ENCODE measurements at regions of chr11 and their contacts with region 1.

Region 1: GRCh38 chr11:130861902-130862860 is 54.1 kb downstream of the SNX19 start:
- DNase-seq: peak; percentile 88
- H3K4me3 Mint-ChIP-seq: no peak overlapping the region
- H3K27ac Mint-ChIP-seq: no peak overlapping the region
- H3K4me1 Mint-ChIP-seq: no peaks in the 10 kb centered on the region
- H3K27me3 Mint-ChIP-seq: no peaks in the 10 kb centered on the region
- CTCF ChIP-seq: peak; percentile 100

Region 2: GRCh38 chr11:130213143-130213978 is 648.8 kb before region 1 on chr11:
- CTCF ChIA-PET with region 1: interaction called, 17 read pairs
- POLR2A ChIA-PET with region 1: no interaction called
- intact Hi-C with region 1: loop called (anchors 2 kb)
- DNase-seq: peak; percentile 55
- H3K4me3 Mint-ChIP-seq: no peak overlapping the region
- H3K27ac Mint-ChIP-seq: no peak overlapping the region
- H3K4me1 Mint-ChIP-seq: no peaks in the 10 kb centered on the region
- H3K27me3 Mint-ChIP-seq: no peaks in the 10 kb centered on the region
- CTCF ChIP-seq: peak; percentile 96

Region 3: DNA sequence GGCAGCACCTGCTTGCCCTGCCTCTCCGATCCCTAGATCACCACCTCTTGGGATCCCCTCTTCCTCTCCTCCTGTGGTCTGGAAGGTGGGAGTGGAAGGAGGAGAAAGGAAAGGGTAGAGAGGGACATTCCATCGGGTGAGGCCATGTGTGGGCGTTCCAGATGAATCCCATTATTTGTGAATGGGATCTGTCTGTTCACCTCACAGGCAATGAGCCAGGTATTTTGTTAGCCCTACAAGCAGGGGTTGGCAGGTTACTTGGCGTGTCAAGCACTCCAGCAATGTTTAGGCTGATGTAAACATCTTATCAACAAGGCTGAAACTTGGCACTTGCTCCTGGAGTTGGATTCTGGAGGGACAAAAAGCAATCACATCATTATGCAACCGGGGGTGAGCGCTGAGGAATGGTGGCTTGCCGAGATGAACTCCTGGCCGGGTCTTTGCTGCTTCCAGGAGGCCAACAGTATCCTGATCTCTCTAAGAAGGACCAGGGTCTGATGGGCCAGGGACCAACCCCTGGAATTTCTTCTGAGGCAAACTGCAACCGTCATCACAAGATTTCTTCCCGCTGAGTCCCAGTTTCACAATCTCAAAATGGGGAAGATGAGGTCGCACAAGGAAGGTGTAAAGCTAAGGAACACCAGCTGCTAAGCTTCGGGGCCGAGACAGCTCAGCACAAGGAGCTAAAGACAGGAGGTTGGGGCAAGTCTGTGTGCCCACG is 441.5 kb before region 1 on chr11:
- CTCF ChIA-PET with region 1: interaction called, 1,064 read pairs
- POLR2A ChIA-PET with region 1: no interaction called
- intact Hi-C with region 1: no loop called
- DNase-seq: peak; percentile 46
- H3K4me3 Mint-ChIP-seq: no peak overlapping the region
- H3K27ac Mint-ChIP-seq: no peak overlapping the region
- H3K4me1 Mint-ChIP-seq: no peaks in the 10 kb centered on the region
- H3K27me3 Mint-ChIP-seq: peaks cover 28% of the 10 kb centered on the region
- CTCF ChIP-seq: no peak

Region 4: GRCh38 chr11:130677486-130678153 is 184.6 kb before region 1 on chr11:
- CTCF ChIA-PET with region 1: interaction called, 12 read pairs
- POLR2A ChIA-PET with region 1: no interaction called
- intact Hi-C with region 1: no loop called
- DNase-seq: peak; percentile 68
- H3K4me3 Mint-ChIP-seq: peak overlapping the region; percentile 45
- H3K27ac Mint-ChIP-seq: peak overlapping the region; percentile 90
- H3K4me1 Mint-ChIP-seq: peaks cover 31% of the 10 kb centered on the region
- H3K27me3 Mint-ChIP-seq: no peaks in the 10 kb centered on the region
- CTCF ChIP-seq: no peak

Region 5: GRCh38 chr11:130832566-130833425 is 29.4 kb before region 1 on chr11:
- CTCF ChIA-PET with region 1: interaction called, 144 read pairs
- POLR2A ChIA-PET with region 1: interaction called, 3 read pairs
- intact Hi-C with region 1: loop called (anchors 1 kb)
- DNase-seq: no peak
- H3K4me3 Mint-ChIP-seq: no peak overlapping the region
- H3K27ac Mint-ChIP-seq: no peak overlapping the region
- H3K4me1 Mint-ChIP-seq: no peaks in the 10 kb centered on the region
- H3K27me3 Mint-ChIP-seq: no peaks in the 10 kb centered on the region
- CTCF ChIP-seq: no peak

Region 6: DNA sequence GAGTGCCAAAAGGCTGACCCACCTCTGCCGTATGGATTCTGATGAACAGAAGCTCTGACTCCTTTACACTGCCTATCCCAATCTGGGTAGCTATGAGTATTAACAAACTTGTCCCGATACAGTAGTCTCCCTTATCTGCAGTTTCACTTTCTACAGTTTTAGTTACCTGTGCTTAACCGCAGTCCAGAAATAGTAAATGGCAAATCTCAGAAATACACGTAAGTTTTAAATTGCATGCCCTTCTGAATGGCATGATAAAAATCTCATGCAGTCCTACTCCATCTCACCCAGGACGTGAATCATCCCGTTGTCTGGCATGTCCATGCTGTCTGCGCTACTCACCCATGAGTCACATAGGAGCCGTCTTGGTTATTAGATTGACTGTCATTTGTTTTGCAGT is 14.7 kb before region 1 on chr11:
- CTCF ChIA-PET with region 1: interaction called, 111 read pairs
- POLR2A ChIA-PET with region 1: interaction called, 4 read pairs
- intact Hi-C with region 1: no loop called
- DNase-seq: peak; percentile 92
- H3K4me3 Mint-ChIP-seq: peak overlapping the region; percentile 57
- H3K27ac Mint-ChIP-seq: peak overlapping the region; percentile 55
- H3K4me1 Mint-ChIP-seq: peaks cover 18% of the 10 kb centered on the region
- H3K27me3 Mint-ChIP-seq: no peaks in the 10 kb centered on the region
- CTCF ChIP-seq: no peak

Region 7: DNA sequence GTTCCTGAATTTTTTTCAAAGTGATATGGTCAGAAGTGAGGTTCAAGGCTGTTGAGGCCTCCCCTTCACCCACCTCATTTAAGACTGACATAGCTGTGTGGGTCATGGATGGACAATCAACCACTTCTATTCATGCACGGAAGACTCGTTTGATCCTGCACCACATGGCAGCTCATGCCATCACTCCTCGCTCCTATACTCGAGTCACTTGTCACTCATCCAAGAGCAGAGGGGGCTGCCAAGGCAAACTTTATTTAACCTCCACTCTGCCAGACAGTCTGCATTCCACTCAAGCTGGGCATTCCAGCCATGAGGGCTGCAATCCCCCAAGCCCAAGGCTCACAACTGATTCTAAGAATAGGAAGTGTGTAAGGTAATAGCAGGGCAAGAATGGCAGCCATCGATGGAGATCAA is 20.0 kb after region 1 on chr11:
- CTCF ChIA-PET with region 1: interaction called, 44 read pairs
- POLR2A ChIA-PET with region 1: interaction called, 3 read pairs
- intact Hi-C with region 1: no loop called
- DNase-seq: no peak
- H3K4me3 Mint-ChIP-seq: no peak overlapping the region
- H3K27ac Mint-ChIP-seq: peak overlapping the region; percentile 51
- H3K4me1 Mint-ChIP-seq: peaks cover 14% of the 10 kb centered on the region
- H3K27me3 Mint-ChIP-seq: no peaks in the 10 kb centered on the region
- CTCF ChIP-seq: no peak

Region 8: GRCh38 chr11:131041331-131042040 is 179.3 kb after region 1 on chr11:
- CTCF ChIA-PET with region 1: no interaction called
- POLR2A ChIA-PET with region 1: no interaction called
- intact Hi-C with region 1: no loop called
- DNase-seq: peak; percentile 39
- H3K4me3 Mint-ChIP-seq: no peak overlapping the region
- H3K27ac Mint-ChIP-seq: no peak overlapping the region
- H3K4me1 Mint-ChIP-seq: peaks cover 15% of the 10 kb centered on the region
- H3K27me3 Mint-ChIP-seq: no peaks in the 10 kb centered on the region
- CTCF ChIP-seq: no peak